CD14-positive monocyte (primary cell): ENCODE measurements at regions of chr2 and their contacts with region 1.

Region 1: DNA sequence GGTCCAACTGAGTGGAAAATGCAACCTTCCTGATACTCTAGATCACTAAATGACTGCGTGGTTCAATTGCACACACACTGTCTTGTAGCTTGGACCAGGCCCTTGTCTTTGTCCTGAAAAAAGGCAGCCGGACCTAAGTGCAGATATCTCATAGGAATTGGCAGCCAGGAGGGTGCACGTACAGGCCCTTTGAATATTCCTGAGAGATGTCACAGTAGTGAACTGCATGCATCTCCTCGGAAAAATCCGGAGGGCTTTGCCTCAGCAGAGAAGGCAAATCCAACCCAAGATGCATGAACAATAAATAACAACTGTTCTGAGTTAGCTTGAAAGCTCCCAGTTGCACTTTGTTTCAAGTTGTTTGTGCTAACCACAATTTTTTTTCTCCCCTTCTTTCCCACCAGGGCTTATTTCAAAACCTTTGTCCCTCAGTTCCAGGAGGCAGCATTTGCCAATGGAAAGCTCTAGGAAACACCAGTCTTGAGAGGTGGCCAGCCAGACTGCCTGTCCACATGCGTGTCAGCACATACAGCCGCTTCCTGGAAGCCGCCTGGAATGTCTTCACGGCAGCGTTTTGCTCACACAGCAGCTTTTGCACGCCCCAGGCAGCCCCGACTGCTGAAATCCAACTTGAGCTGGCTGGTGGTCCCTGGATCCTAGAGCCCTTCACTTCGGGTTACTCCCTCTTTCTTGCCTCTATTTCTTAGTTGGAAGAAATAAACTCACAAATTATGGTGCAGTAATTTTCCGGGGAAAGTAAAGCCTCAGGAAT is 54.4 kb upstream of the FOSL2 start:
- DNase-seq: no peak
- H3K4me3 ChIP-seq: no peak overlapping the region
- H3K4me3 Mint-ChIP-seq: no peak overlapping the region
- H3K27ac ChIP-seq: no peak overlapping the region
- H3K27ac Mint-ChIP-seq: peak overlapping the region in 2 of 7 donors; percentile 12 to 73
- H3K4me1 ChIP-seq: peaks cover 11 to 21% of the 10 kb centered on the region in 2 donors
- H3K4me1 Mint-ChIP-seq: peaks cover 26% of the 10 kb centered on the region
- H3K27me3 ChIP-seq: no peaks in the 10 kb centered on the region
- H3K27me3 Mint-ChIP-seq: peaks cover 0 to 3% (median 2%) of the 10 kb centered on the region in 3 donors
- CTCF ChIP-seq: no peak

Region 2: DNA sequence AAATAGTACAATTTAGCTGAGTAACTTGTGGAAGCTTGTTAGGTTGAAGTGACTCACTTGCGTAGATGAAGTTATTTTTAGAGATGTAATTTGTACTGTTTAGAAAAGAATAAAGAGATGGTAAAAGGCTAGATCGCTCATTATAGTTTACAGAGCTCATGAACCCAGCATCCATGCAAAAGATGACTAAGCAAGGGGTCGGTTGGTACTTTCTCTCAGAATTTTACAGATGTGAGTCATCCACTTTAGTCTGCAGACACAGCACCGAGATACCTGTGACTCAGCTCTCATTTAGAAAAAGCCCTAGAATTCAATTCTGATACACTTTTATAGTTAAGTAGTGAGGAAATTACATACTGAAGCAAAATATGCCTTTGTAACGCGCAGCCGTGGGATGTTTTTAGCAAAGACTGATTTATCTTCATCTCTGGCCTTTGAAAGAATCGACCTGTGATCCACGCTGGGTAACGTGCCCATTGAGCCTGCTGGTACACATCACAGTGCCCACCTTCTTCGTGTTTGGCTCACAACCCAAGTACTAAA is 62.1 kb before region 1 on chr2:
- intact Hi-C with region 1: loop called in 1 of 2 experiments (anchors 10 kb)
- DNase-seq: peak; percentile 23 to 84 (median 48)
- H3K4me3 ChIP-seq: no peak overlapping the region
- H3K4me3 Mint-ChIP-seq: no peak overlapping the region
- H3K27ac ChIP-seq: no peak overlapping the region
- H3K27ac Mint-ChIP-seq: peak overlapping the region in 1 of 7 donors; percentile 44
- H3K4me1 ChIP-seq: peaks cover 19 to 26% of the 10 kb centered on the region in 2 donors
- H3K4me1 Mint-ChIP-seq: peaks cover 37% of the 10 kb centered on the region
- H3K27me3 ChIP-seq: no peaks in the 10 kb centered on the region
- H3K27me3 Mint-ChIP-seq: peaks cover 0 to 2% (median 0%) of the 10 kb centered on the region in 3 donors
- CTCF ChIP-seq: no peak

Region 3: GRCh38 chr2:28377984-28378678 is 39.9 kb after region 1 on chr2:
- intact Hi-C with region 1: loop called in 1 of 2 experiments (anchors 5 kb)
- DNase-seq: peak; percentile 76 to 79 (median 77)
- H3K4me3 ChIP-seq: peak overlapping the region in 1 of 3 experiments; percentile 49
- H3K4me3 Mint-ChIP-seq: peak overlapping the region; percentile 50 to 86
- H3K27ac ChIP-seq: peak overlapping the region in 1 of 2 donors; percentile 67
- H3K27ac Mint-ChIP-seq: peak overlapping the region; percentile 57 to 88 (median 81)
- H3K4me1 ChIP-seq: peaks cover 21 to 38% of the 10 kb centered on the region in 2 donors
- H3K4me1 Mint-ChIP-seq: peaks cover 41% of the 10 kb centered on the region
- H3K27me3 ChIP-seq: no peaks in the 10 kb centered on the region
- H3K27me3 Mint-ChIP-seq: peaks cover 9 to 11% (median 10%) of the 10 kb centered on the region in 3 donors
- CTCF ChIP-seq: no peak